ENCODE measurements at regions of chr2 and their contacts with region 1.

Region 1: DNA sequence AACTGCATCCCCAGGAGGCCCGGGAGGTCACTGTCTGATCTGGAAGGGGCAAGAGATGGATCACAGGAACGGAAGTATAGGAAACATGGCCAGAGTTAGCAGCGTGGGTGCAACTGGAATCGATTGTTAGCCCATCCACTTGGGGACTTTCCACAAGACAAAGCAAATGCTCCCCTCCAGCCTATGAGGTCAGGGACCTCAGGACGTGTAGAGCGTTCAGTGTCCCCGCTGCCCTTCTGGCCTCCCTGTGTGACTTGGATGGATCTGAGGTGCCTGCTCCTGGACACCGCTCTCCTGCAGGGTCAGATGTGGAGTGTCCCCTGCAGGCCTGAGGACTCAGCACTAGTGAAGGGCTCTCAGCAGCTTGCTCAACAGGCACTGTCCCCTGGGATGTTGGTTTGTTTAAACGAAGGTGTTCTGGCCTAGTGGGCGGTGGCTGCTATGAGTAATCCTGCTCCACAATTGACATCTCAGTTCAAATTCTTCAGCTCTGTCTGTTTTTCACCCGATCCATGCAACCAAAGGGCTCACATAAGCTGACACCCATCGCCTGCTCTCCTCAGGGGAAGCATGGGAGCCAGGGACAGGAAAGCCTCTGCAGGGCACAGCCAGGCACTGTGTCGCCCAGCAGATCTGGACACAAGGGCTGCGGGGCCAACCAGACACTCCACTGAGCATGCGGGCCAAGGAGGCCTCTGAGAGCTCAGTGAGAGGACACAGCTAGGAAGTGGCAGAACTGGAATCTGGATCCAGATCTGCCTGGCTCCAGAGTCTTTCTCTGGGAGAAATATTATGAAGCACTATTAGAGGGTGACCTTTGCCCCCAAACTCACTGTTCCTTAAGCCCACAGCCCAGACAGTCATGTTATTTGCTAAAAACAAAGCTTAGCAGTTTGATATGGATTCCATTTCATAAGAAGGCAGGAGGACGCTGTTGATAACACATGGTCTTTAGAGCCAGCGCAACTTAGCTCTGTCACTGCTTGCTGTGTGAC is 78.5 kb downstream of the RHOB start:
- DNase-seq: peak in 4 of 42 donors; percentile 20 to 29 (median 24)

Region 2: GRCh38 chr2:20561701-20562454 is 36.5 kb after region 1 on chr2:
- intact Hi-C with region 1: no loop called
- DNase-seq: peak in 5 of 42 donors; percentile 38 to 63 (median 50)

Region 3: DNA sequence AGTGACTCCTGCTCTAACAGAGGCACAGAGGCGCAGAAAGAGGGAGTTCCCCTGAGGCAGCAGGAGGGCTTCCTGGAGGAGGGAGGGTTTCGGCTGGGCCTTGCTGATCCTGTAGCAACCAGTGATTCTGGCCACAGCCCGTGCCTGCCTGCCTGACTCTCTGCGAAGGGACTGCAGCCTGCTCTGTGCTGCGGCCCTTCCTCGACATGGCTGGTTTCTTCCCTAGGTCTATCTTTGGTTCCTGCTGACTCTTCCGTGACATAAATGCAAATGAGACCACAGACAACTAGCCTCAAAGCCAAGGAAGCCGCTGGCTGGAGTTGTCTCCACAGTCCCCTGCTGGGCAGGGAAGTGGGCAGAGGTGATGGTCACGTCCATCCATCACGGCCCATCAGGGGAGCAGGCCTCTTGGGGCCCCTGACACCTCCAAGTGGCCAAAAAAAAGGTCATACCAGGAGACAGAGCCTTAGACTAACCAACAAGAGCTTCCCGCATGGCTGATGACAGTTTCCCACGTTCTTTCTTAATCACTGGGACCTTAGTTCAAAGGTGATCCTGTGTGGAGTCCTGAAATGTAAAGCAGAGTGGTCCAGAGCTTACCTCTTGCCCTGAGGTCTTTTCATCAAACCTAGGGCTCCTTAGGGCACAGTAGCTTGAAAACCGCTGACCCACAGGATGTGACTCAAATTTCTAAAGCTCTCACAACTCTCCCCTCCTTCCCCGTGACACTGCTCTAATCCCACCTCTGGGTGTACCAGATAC is 70.3 kb after region 1 on chr2:
- intact Hi-C with region 1: loop called (anchors 10 kb)
- DNase-seq: peak in 15 of 42 donors; percentile 9 to 51 (median 28)

Region 4: GRCh38 chr2:20707601-20708000 is 182.3 kb after region 1 on chr2:
- intact Hi-C with region 1: no loop called
- DNase-seq: no peak